ENCODE measurements at regions of chr20 and their contacts with region 1.

Region 1: GRCh38 chr20:43448748-43449535 is 8.8 kb upstream of the SRSF6 start:
- DNase-seq: peak in 1 of 2 experiments; percentile 60
- H3K4me3 ChIP-seq: no peak overlapping the region
- H3K27ac ChIP-seq: no peak overlapping the region
- H3K4me1 ChIP-seq: no peaks in the 10 kb centered on the region
- H3K27me3 ChIP-seq: no peaks in the 10 kb centered on the region; a peak in 1 of 7 replicates
- CTCF ChIP-seq: peak; percentile 64 to 78 (median 74)
- EP300 ChIP-seq: no peak
- POLR2A ChIP-seq: no peak
- RAD21 ChIP-seq: peak; percentile 89

Region 2: DNA sequence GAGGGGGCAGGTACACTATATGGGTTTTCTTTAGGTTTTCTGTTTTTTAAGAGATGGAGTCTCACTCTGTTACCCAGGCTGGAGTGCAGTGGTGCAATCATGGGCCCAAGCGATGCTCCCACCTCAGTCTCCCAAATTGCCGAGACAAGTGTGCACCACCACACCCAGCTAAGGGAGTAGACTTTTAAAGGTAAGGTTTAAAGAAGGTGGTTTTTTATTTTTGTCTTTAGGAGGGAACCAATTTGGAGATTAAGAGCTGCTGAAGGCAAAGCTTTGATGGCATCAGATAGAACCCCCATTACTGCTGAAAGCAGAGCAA is 16.6 kb after region 1 on chr20:
- CTCF ChIA-PET with region 1: interaction called, 13 read pairs
- POLR2A ChIA-PET with region 1: interaction called, 15 read pairs
- DNase-seq: no peak
- H3K4me3 ChIP-seq: no peak overlapping the region
- H3K27ac ChIP-seq: no peak overlapping the region
- H3K4me1 ChIP-seq: no peaks in the 10 kb centered on the region
- H3K27me3 ChIP-seq: no peaks in the 10 kb centered on the region
- CTCF ChIP-seq: no peak
- EP300 ChIP-seq: no peak
- POLR2A ChIP-seq: peak in 1 of 2 experiments; percentile 24; a peak in 1 of 3 replicates
- RAD21 ChIP-seq: no peak

Region 3: DNA sequence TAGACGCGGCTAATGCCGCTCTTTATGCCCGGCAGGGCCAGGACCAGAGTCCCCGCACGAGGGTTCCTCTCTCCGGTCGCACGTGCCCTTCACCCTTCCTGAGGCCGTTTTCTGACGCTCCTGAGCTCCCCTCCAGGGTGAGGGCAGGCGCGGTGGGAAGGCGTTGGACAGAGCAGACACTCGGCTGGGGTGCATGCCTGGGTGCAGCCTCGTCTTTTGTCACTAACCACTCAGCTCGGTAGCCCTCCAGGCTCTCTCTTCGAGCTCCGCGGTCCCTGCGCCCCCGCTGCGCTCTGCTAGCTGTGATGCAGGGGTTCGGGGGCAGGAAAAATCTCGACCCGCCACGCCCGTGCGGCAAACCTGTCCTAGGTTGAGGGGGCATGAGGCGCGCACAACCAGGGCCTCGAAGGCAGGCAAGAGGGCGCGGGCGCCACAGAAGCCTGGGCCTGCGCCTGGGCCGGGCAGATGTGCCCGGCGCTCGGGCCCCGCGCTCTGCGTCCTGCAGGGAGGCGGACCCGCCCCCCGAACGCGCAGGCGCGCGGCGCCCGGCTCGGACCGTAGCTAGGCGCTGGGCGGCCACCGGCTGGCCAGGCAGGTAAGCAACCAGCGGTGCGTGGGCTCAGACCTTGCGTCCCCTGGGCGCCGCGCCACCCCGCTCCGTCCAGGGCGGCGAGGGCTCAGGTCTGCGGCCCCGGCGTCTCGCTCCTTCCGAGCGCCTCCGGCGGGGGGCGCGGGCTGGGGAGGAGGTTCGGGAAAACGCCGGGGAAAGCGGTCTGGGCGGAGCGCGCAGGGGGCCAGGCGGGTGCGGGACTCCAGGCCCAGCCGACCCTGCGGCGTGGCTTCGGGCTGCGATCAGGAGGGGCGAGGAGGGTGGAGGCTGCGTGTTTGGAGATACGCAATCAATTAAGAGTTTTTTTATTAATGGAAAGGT is 58.5 kb after region 1 on chr20 and contains the start of gene L3MBTL1:
- CTCF ChIA-PET with region 1: interaction called, 12 read pairs
- POLR2A ChIA-PET with region 1: interaction called, 6 read pairs
- DNase-seq: peak in 1 of 2 experiments; percentile 84
- H3K4me3 ChIP-seq: peak within 1 kb of the TSS; percentile 60 to 79 (median 62)
- H3K27ac ChIP-seq: no peak within 1 kb of the TSS
- H3K4me1 ChIP-seq: peaks cover 2 to 5% (median 5%) of the 10 kb centered on the region in 4 experiments; a peak in 6 of 7 replicates
- H3K27me3 ChIP-seq: peaks cover 4 to 18% (median 12%) of the 10 kb centered on the region in 4 experiments
- CTCF ChIP-seq: no peak
- EP300 ChIP-seq: no peak
- POLR2A ChIP-seq: peak in 1 of 2 experiments; percentile 63; a peak in 2 of 3 replicates
- RAD21 ChIP-seq: no peak
- total RNA-seq, gene L3MBTL1: 13.6 and 17.0 TPM in 2 replicates

Measured in H1 (cell line).